HepG2 (cell line): ENCODE measurements at regions of chr16 and their contacts with region 1.

Region 1: DNA sequence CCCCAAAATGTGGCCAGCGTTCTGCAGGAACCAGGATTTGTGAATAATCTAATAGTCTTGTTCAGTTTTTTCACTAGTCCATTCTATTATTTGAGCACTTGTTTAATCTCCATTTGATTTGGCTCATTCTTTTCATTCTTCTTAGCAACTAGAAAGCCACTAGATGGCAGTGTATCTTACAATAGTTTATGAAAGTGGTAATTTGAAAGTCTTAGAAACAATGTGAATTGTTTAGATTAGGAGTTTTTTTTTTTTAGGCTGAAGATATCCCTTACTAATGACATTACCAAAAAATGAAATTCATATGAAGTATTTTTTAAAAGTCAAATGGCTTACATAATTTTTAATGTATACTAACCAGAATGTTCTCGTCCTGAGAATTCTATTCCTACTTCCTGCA is 6.7 kb downstream of the ERI2 start:
- DNase-seq: peak; percentile 18
- ATAC-seq: no peak
- H3K4me3 ChIP-seq: no peak overlapping the region
- H3K27ac ChIP-seq: no peak overlapping the region
- H3K4me1 ChIP-seq: peaks cover 16% of the 10 kb centered on the region
- H3K27me3 ChIP-seq: no peaks in the 10 kb centered on the region
- CTCF ChIP-seq: peak; percentile 47
- EP300 ChIP-seq: no peak
- POLR2A ChIP-seq: no peak
- RAD21 ChIP-seq: no peak

Region 2: GRCh38 chr16:20675488-20676267 is 123.9 kb before region 1 on chr16:
- CTCF ChIA-PET with region 1: no interaction called
- POLR2A ChIA-PET with region 1: no interaction called
- in situ Hi-C with region 1: no loop called
- intact Hi-C with region 1: no loop called
- DNase-seq: peak; percentile 64
- ATAC-seq: peak; percentile 42
- H3K4me3 ChIP-seq: peak overlapping the region; percentile 75 to 84 (median 80)
- H3K27ac ChIP-seq: peak overlapping the region; percentile 31
- H3K4me1 ChIP-seq: peaks cover 57% of the 10 kb centered on the region
- H3K27me3 ChIP-seq: no peaks in the 10 kb centered on the region; a peak in 1 of 5 replicates
- CTCF ChIP-seq: no peak
- EP300 ChIP-seq: no peak
- POLR2A ChIP-seq: no peak
- RAD21 ChIP-seq: no peak

Region 3: GRCh38 chr16:20695024-20695423 is 104.6 kb before region 1 on chr16:
- CTCF ChIA-PET with region 1: no interaction called
- POLR2A ChIA-PET with region 1: no interaction called
- in situ Hi-C with region 1: no loop called
- intact Hi-C with region 1: no loop called
- DNase-seq: no peak
- ATAC-seq: no peak
- H3K4me3 ChIP-seq: no peak overlapping the region
- H3K27ac ChIP-seq: no peak overlapping the region
- H3K4me1 ChIP-seq: peaks cover 21% of the 10 kb centered on the region
- H3K27me3 ChIP-seq: no peaks in the 10 kb centered on the region
- CTCF ChIP-seq: no peak
- EP300 ChIP-seq: no peak
- POLR2A ChIP-seq: no peak
- RAD21 ChIP-seq: no peak

Region 4: GRCh38 chr16:21083729-21084268 is 284.2 kb after region 1 on chr16:
- CTCF ChIA-PET with region 1: interaction called, 13 read pairs
- POLR2A ChIA-PET with region 1: no interaction called
- in situ Hi-C with region 1: no loop called
- intact Hi-C with region 1: loop called (anchors 1 kb)
- DNase-seq: peak; percentile 64
- ATAC-seq: peak; percentile 93
- H3K4me3 ChIP-seq: no peak overlapping the region
- H3K27ac ChIP-seq: no peak overlapping the region
- H3K4me1 ChIP-seq: peaks cover 8% of the 10 kb centered on the region; the same call in 1 of the 2 replicates
- H3K27me3 ChIP-seq: no peaks in the 10 kb centered on the region
- CTCF ChIP-seq: peak; percentile 96
- EP300 ChIP-seq: no peak
- POLR2A ChIP-seq: no peak
- RAD21 ChIP-seq: peak; percentile 93